GM10248 (cell line): ENCODE measurements at regions of chr3 and their contacts with region 1.

Region 1: GRCh38 chr3:152298393-152299242 is 29.9 kb downstream of the MBNL1 start:
- DNase-seq: peak; percentile 28
- CTCF ChIP-seq: no peak

Region 2: GRCh38 chr3:151638555-151639417 is 659.8 kb before region 1 on chr3:
- CTCF ChIA-PET with region 1: no interaction called
- POLR2A ChIA-PET with region 1: no interaction called
- DNase-seq: no peak
- CTCF ChIP-seq: no peak

Region 3: GRCh38 chr3:152283501-152284376 is 14.9 kb before region 1 on chr3:
- CTCF ChIA-PET with region 1: interaction called, 17 read pairs
- POLR2A ChIA-PET with region 1: interaction called, 3 read pairs
- DNase-seq: no peak
- CTCF ChIP-seq: no peak

Region 4: GRCh38 chr3:152539191-152539768 is 240.7 kb after region 1 on chr3:
- CTCF ChIA-PET with region 1: no interaction called
- POLR2A ChIA-PET with region 1: no interaction called
- DNase-seq: no peak
- CTCF ChIP-seq: no peak

Region 5: GRCh38 chr3:153315781-153316180 is 1017.2 kb after region 1 on chr3:
- CTCF ChIA-PET with region 1: no interaction called
- POLR2A ChIA-PET with region 1: interaction called, 11 read pairs
- DNase-seq: no peak
- CTCF ChIP-seq: no peak